ENCODE measurements at regions of chr19 and their contacts with region 1.

Region 1: GRCh38 chr19:48506138-48506733 is 5.4 kb downstream of the LMTK3 start:
- DNase-seq: peak in 2 of 3 donors; percentile 54 to 60
- H3K4me3 ChIP-seq: no peak overlapping the region
- H3K27ac ChIP-seq: no peak overlapping the region
- H3K4me1 ChIP-seq: peaks cover 0 to 17% (median 13%) of the 10 kb centered on the region in 4 experiments
- H3K27me3 ChIP-seq: peaks cover 0 to 7% (median 5%) of the 10 kb centered on the region in 5 experiments

Region 2: GRCh38 chr19:48448563-48448962 is 57.7 kb before region 1 on chr19:
- CTCF ChIA-PET with region 1: no interaction called
- POLR2A ChIA-PET with region 1: no interaction called
- DNase-seq: no peak
- H3K4me3 ChIP-seq: no peak overlapping the region
- H3K27ac ChIP-seq: no peak overlapping the region
- H3K4me1 ChIP-seq: peaks cover 3 to 27% (median 27%) of the 10 kb centered on the region in 4 experiments
- H3K27me3 ChIP-seq: peaks cover 0 to 15% (median 10%) of the 10 kb centered on the region in 5 experiments

Region 3: DNA sequence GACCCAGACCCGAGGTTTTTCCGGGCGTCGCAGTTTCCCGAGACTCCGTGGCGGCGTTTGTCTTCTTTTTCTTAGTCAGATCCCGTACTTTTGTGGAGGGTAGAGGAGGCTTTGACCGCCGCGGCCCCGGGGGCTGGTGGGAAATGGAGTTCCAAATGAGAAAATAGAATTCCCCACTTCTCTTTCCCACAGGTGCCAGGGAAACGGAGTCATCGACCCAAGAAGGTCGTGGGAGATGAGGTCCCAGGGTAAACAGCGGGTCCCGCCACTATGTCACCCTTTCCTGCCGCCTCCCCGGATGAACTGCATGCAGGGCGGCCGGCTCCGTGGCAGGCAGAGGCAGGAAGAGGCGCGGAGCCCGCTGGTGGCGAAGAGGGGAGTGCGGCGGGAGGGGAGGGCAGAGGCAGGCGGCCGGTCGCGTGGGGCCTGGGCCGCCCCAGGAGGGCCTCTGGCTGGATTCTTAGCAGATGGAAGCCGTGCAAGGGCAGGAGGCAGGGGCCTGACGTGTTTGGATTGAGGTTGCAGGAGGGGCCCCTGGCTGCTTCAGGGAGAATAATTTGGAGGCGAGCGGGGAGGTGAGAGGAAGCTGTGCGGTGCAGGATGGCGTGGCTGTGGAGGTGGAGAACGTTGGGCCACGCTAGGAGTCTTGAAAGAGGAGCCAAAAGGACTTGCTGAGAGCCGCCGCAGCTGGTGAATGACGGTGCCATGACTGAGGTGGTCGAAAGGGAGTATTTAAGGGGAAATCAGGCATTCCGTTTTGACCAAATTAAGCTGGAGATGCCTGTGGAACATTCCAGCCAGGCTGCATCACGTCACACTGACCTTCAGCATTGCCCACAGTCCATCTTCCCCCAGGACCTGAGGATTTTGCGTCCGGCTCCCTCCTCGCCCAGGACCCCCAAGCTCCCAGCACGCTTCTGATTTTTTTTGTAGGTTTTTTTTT is 25.4 kb before region 1 on chr19:
- CTCF ChIA-PET with region 1: no interaction called
- POLR2A ChIA-PET with region 1: no interaction called
- DNase-seq: peak in 2 of 3 donors; percentile 55 to 67
- H3K4me3 ChIP-seq: peak overlapping the region; percentile 38 to 87 (median 62)
- H3K27ac ChIP-seq: peak overlapping the region in 1 of 2 experiments; percentile 67
- H3K4me1 ChIP-seq: peaks cover 0 to 21% (median 13%) of the 10 kb centered on the region in 4 experiments
- H3K27me3 ChIP-seq: no peaks in the 10 kb centered on the region

Region 4: DNA sequence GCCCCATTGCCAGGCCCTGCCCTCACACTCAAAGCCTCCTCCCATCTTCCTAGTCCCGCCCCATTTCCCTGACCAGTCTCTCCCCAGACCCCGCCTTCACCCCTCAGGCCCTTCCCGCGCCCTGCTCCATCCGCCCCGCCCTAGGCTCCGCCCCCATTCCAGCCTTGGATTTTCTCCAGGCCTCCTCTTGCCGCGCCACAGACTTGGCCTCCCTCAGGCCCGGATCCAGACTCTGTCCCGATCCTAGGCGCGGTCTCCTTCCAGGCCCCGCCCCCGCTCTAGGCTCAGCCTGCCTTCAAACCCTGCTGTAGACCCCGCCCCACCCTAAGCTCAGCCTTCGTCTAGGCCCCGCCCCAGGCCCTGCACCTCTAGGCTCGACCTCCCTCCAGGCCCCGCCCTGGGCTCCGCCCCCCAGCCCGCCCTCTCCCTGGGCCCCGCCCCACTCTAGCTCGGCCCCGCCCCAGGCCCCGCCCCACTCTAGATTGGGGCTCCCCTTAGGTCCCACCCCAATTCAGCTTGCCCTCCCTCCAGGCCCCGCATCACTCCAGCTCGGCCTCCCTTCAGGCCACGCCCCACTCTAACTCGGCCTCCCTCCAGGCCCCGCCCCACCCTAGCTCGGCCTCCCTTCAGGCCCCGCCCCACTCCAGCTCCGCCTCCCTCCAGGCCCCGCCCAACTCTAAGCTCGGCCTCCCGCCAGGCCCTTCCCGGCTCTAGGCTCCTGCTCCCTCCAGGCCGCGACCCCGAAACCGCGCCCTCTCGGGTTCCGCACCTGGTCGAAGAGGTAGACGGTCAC is 13.1 kb before region 1 on chr19:
- CTCF ChIA-PET with region 1: interaction called, 10 read pairs
- POLR2A ChIA-PET with region 1: interaction called, 4 read pairs
- DNase-seq: peak; percentile 91 to 96 (median 96)
- H3K4me3 ChIP-seq: peak overlapping the region; percentile 19 to 81 (median 64)
- H3K27ac ChIP-seq: peak overlapping the region in 1 of 2 experiments; percentile 43
- H3K4me1 ChIP-seq: peaks cover 0 to 45% (median 36%) of the 10 kb centered on the region in 4 experiments
- H3K27me3 ChIP-seq: peaks cover 0 to 29% (median 3%) of the 10 kb centered on the region in 5 experiments

Region 5: GRCh38 chr19:48582168-48582567 is 75.9 kb after region 1 on chr19:
- CTCF ChIA-PET with region 1: interaction called, 30 read pairs
- POLR2A ChIA-PET with region 1: no interaction called
- DNase-seq: no peak
- H3K4me3 ChIP-seq: no peak overlapping the region
- H3K27ac ChIP-seq: no peak overlapping the region
- H3K4me1 ChIP-seq: peaks cover 0 to 7% (median 5%) of the 10 kb centered on the region in 4 experiments
- H3K27me3 ChIP-seq: no peaks in the 10 kb centered on the region

Measured in common myeloid progenitor, CD34-positive (primary cell).